SK-N-SH (cell line): ENCODE measurements at regions of chr10 and their contacts with region 1.

Region 1: DNA sequence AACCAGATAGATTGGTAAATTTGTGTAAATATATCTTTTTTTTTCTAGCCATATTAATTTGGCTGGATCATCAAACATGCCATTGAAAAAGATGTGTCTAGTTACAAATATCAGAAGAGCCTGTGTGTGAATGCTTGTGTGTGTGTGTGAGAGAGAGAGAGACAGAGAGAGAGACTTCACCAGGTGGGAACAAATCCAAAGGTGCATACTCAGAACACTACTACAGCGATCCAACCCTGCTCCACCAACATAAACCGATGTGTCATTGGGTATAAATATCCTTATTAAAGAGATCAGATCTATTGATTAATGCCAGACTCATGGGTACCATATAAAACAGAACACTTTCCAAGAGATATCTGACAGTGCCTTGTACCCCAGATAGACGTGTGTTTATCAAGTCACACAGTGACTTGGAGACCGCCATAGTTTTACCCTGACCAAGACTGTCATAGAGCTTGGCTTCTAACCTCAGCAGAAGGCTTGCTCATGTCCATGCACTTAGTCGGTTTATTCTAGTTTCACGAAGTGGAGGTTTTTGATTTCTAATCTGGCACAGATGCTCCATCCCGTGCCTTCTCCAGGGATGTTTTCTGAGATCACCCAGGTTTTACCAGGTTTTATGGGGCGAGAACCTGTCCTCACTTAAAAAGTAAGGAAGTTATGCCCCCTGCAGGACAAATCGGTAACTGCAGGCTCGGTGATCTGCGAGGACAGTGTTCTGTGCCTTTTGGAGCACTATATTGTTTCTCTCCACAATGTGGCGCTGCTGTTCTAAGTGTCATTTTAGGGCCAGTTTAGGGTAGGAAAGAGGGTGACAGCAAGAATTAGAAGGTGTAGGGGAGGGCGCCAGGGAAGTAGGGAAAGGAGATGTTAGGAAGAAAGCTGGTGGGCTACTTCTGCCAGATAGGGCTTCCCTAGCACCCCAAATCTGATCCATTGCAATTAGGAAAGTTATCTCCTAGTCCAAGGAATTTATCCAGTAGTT is 29.3 kb upstream of the WNT8B start:
- DNase-seq: peak; percentile 77
- H3K4me3 ChIP-seq: no peak overlapping the region; a peak in 1 of 4 replicates
- H3K27ac ChIP-seq: no peak overlapping the region
- H3K4me1 ChIP-seq: no peaks in the 10 kb centered on the region
- H3K27me3 ChIP-seq: no peaks in the 10 kb centered on the region
- CTCF ChIP-seq: peak; percentile 100
- EP300 ChIP-seq: no peak
- RAD21 ChIP-seq: peak; percentile 100

Region 2: GRCh38 chr10:100303724-100304319 is 129.7 kb before region 1 on chr10:
- CTCF ChIA-PET with region 1: interaction called, 36 read pairs
- POLR2A ChIA-PET with region 1: no interaction called
- DNase-seq: peak; percentile 57
- H3K4me3 ChIP-seq: no peak overlapping the region; a peak in 1 of 4 replicates
- H3K27ac ChIP-seq: no peak overlapping the region
- H3K4me1 ChIP-seq: no peaks in the 10 kb centered on the region
- H3K27me3 ChIP-seq: peaks cover 31% of the 10 kb centered on the region
- CTCF ChIP-seq: peak; percentile 70
- EP300 ChIP-seq: no peak
- RAD21 ChIP-seq: peak; percentile 76

Region 3: DNA sequence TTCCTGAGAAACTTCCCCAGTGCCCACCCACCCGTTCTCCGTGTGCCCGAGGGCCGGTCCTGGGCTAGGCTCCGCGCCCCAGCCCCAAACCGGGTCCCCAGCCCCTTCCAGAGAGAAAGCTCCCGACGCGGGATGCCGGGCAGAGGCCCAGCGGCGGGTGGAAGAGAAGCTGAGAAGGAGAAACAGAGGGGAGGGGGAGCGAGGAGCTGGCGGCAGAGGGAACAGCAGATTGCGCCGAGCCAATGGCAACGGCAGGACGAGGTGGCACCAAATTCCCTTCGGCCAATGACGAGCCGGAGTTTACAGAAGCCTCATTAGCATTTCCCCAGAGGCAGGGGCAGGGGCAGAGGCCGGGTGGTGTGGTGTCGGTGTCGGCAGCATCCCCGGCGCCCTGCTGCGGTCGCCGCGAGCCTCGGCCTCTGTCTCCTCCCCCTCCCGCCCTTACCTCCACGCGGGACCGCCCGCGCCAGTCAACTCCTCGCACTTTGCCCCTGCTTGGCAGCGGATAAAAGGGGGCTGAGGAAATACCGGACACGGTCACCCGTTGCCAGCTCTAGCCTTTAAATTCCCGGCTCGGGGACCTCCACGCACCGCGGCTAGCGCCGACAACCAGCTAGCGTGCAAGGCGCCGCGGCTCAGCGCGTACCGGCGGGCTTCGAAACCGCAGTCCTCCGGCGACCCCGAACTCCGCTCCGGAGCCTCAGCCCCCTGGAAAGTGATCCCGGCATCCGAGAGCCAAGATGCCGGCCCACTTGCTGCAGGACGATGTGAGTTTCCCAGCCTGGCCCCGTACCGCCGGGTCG is 86.6 kb before region 1 on chr10 and contains the start of gene SCD:
- CTCF ChIA-PET with region 1: interaction called, 432 read pairs
- POLR2A ChIA-PET with region 1: interaction called, 11 read pairs
- DNase-seq: peak; percentile 93
- H3K4me3 ChIP-seq: peak within 1 kb of the TSS; percentile 90 to 95
- H3K27ac ChIP-seq: peak within 1 kb of the TSS in 1 of 2 experiments; percentile 94; a peak in 2 of 4 replicates
- H3K4me1 ChIP-seq: peaks cover 0 to 51% of the 10 kb centered on the region in 2 experiments; a peak in 1 of 4 replicates
- H3K27me3 ChIP-seq: no peaks in the 10 kb centered on the region
- CTCF ChIP-seq: no peak
- EP300 ChIP-seq: 0 out of 4 replicates have a peak, but pooled peaks of 1 of the 2 experiments have one; percentile 10
- RAD21 ChIP-seq: no peak
- polyA plus RNA-seq, gene SCD: 19.7 and 26.4 TPM in 2 replicates

Region 4: GRCh38 chr10:100364735-100365391 is 68.7 kb before region 1 on chr10:
- CTCF ChIA-PET with region 1: interaction called, 14 read pairs
- POLR2A ChIA-PET with region 1: no interaction called
- DNase-seq: peak; percentile 58
- H3K4me3 ChIP-seq: no peak overlapping the region
- H3K27ac ChIP-seq: peak overlapping the region; percentile 19 to 38; a peak in 3 of 4 replicates
- H3K4me1 ChIP-seq: peaks cover 19 to 42% of the 10 kb centered on the region in 2 experiments; a peak in 3 of 4 replicates
- H3K27me3 ChIP-seq: no peaks in the 10 kb centered on the region
- CTCF ChIP-seq: no peak
- EP300 ChIP-seq: peak in 1 of 2 experiments; percentile 71; a peak in 2 of 4 replicates
- RAD21 ChIP-seq: no peak; the same call in 1 of the 2 replicates

Region 5: DNA sequence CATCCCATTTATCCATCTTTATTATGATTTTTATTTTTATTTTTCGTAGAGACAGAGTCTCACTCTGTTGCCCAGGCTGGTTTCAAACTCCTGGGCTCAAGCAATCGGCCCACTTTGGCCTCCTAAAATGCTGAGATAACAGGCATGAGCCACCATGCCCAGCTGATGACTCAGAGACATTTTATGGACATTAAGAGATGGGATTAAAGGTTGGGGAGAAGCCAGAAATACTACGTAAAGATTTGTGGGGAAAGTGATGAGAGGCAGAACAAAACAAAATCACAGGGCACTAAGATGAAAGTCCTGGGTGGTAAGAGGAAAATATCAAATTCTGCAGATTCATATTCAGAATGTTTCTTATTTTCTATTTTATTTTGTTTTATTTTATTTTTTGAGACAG is 36.8 kb after region 1 on chr10:
- CTCF ChIA-PET with region 1: interaction called, 11 read pairs
- POLR2A ChIA-PET with region 1: no interaction called
- DNase-seq: no peak
- H3K4me3 ChIP-seq: no peak overlapping the region
- H3K27ac ChIP-seq: no peak overlapping the region
- H3K4me1 ChIP-seq: peaks cover 0 to 12% of the 10 kb centered on the region in 2 experiments; a peak in 1 of 4 replicates
- H3K27me3 ChIP-seq: no peaks in the 10 kb centered on the region
- CTCF ChIP-seq: no peak
- EP300 ChIP-seq: no peak
- RAD21 ChIP-seq: no peak

Region 6: DNA sequence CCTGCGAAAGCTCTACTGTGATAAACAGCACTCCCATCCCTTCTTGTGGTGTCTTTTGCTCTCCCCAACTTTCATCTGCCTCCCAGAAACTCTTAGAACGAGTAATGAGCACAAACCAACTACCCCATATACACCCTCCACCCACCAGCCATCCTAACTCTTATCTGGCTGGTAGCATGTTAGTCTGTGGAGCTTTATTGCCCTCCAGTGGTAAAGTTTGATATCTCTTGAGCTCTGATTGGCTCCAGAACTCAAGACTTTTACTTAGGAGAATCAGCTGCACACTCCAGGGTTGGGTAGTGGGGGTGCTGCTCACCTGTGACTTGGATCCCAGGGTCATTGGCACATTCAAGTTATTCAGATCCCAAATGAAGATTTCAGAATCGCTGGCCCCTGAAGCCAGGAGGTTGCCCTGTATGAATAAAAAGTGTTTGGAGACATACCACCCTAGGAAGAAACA is 75.2 kb after region 1 on chr10:
- CTCF ChIA-PET with region 1: interaction called, 150 read pairs
- POLR2A ChIA-PET with region 1: no interaction called
- DNase-seq: peak; percentile 70
- H3K4me3 ChIP-seq: no peak overlapping the region
- H3K27ac ChIP-seq: no peak overlapping the region
- H3K4me1 ChIP-seq: peaks cover 0 to 15% of the 10 kb centered on the region in 2 experiments; a peak in 2 of 4 replicates
- H3K27me3 ChIP-seq: no peaks in the 10 kb centered on the region
- CTCF ChIP-seq: peak; percentile 81
- EP300 ChIP-seq: no peak
- RAD21 ChIP-seq: peak; percentile 94

Region 7: DNA sequence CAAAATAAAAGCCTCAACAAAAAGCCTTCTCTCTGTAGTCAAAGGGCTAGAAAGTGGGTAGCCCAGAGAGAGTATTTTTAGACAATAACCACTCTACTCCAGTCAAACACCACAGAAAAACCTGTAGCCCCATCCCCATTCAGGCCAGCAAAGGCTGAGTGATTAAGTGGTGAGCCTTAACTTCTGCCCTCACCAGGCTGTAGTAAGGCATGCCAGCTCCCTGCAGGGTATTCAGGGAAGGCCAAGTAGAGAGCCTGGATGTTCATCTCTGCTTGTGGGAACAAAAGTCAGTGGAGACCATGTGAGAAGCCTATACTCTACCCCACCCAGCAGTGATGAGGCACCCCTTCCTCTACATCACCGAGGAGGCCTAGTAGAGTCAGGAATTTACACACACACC is 153.4 kb after region 1 on chr10:
- CTCF ChIA-PET with region 1: no interaction called
- POLR2A ChIA-PET with region 1: no interaction called
- DNase-seq: no peak
- H3K4me3 ChIP-seq: no peak overlapping the region
- H3K27ac ChIP-seq: no peak overlapping the region
- H3K4me1 ChIP-seq: no peaks in the 10 kb centered on the region
- H3K27me3 ChIP-seq: no peaks in the 10 kb centered on the region; the same call in 1 of the 2 replicates
- CTCF ChIP-seq: no peak
- EP300 ChIP-seq: no peak
- RAD21 ChIP-seq: no peak